CD8-positive, alpha-beta T cell (primary cell): ENCODE measurements at regions of chr6 and their contacts with region 1.

Region 1: GRCh38 chr6:30717042-30717844 is at the start of gene MDC1:
- DNase-seq: peak; percentile 97 to 100 (median 98)
- ATAC-seq: peak; percentile 72
- H3K4me3 ChIP-seq: peak within 1 kb of the TSS; percentile 69 to 70
- H3K4me3 Mint-ChIP-seq: peak within 1 kb of the TSS; percentile 92
- H3K27ac ChIP-seq: peak within 1 kb of the TSS; percentile 83 to 90
- H3K27ac Mint-ChIP-seq: peak within 1 kb of the TSS; percentile 99
- H3K4me1 ChIP-seq: peaks cover 23% of the 10 kb centered on the region
- H3K4me1 Mint-ChIP-seq: peaks cover 51% of the 10 kb centered on the region
- H3K27me3 ChIP-seq: no peaks in the 10 kb centered on the region
- H3K27me3 Mint-ChIP-seq: no peaks in the 10 kb centered on the region
- CTCF ChIP-seq: peak; percentile 47
- total RNA-seq, gene MDC1: 38.9 to 48.8 TPM

Region 2: DNA sequence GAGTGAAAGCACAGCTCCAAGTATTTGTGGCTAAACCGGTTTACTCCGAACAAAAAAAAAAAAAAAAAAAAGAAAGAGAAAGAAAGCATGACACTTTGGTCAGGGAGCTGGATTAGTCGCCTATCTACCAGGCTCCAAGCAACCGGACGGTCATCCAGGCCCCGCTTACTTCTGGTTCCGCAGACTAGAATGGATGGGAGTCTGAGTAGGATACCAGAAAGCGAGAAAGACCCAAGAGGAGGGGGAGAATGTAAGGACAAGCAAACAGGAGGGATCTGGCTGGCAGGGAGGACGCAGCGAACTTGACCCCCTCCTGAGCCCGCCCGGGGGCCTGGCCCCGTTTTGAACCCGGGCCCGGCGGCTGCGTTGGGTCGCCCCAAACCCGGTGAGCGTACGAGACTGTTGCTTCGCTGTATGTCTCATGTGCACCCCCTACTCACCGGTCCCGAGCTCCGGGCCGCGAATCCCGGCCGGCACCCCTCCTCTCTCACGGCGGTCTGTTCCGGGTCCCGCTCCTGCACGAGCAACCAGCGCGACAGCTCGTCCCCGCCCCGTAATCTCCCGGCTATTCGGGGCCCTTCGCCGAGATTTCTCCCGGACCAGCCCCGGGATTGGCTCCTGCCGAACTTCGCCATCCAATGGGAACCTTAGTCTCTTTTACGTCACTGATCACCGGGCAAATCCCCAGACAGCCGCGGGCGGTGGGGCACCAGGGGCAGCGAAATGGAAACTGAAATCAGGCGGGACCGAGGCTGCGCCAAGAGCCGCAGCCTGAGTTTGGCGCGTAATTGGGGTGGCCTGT is 504.2 kb before region 1 on chr6 and contains the start of gene TRIM26:
- CTCF ChIA-PET with region 1: no interaction called
- POLR2A ChIA-PET with region 1: no interaction called
- intact Hi-C with region 1: loop called in 1 of 2 experiments (anchors 10 kb)
- DNase-seq: peak; percentile 92 to 98 (median 96)
- ATAC-seq: peak; percentile 86
- H3K4me3 ChIP-seq: peak within 1 kb of the TSS; percentile 76 to 99
- H3K4me3 Mint-ChIP-seq: peak within 1 kb of the TSS; percentile 99
- H3K27ac ChIP-seq: peak within 1 kb of the TSS; percentile 96
- H3K27ac Mint-ChIP-seq: peak within 1 kb of the TSS; percentile 99
- H3K4me1 ChIP-seq: peaks cover 33% of the 10 kb centered on the region
- H3K4me1 Mint-ChIP-seq: peaks cover 63% of the 10 kb centered on the region
- H3K27me3 ChIP-seq: no peaks in the 10 kb centered on the region
- H3K27me3 Mint-ChIP-seq: no peaks in the 10 kb centered on the region
- CTCF ChIP-seq: no peak
- total RNA-seq, gene TRIM26: 54.8 to 56.8 TPM

Region 3: DNA sequence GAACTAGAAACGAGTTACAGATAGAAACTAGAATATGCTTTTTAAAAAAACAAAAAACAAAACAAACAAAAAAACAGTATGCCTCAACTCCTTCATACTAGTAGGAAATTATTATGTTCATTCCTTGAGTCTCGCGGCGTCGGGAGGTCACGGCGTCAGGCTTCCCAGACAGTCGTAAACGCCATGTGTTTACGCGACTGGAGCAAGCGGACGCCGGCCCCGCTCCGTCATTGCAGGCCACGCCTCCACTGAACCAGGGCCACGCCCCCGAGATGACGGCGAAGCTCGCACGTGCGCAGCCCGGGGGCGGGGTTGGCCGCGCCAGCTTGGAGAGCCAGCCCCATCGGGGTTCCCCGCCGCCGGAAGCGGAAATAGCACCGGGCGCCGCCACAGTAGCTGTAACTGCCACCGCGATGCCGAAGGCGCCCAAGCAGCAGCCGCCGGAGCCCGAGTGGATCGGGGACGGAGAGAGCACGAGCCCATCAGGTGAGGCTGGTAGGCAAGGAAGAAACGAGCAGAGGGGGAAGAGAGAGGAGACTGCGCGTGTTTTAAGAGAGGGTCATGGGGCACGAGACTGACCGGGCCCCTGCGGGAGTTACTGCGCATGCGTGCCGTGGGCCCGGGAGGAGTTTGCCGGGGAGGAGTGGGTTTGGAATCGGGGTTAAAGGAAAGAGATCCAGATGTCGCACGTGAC is 146.0 kb before region 1 on chr6 and contains the start of gene ABCF1:
- CTCF ChIA-PET with region 1: no interaction called
- POLR2A ChIA-PET with region 1: interaction called, 3 read pairs
- intact Hi-C with region 1: loop called in 1 of 2 experiments (anchors 1 kb)
- DNase-seq: peak; percentile 99 to 100 (median 100)
- ATAC-seq: peak; percentile 96
- H3K4me3 ChIP-seq: peak within 1 kb of the TSS; percentile 64 to 86
- H3K4me3 Mint-ChIP-seq: peak within 1 kb of the TSS; percentile 98
- H3K27ac ChIP-seq: peak within 1 kb of the TSS; percentile 90 to 98
- H3K27ac Mint-ChIP-seq: peak within 1 kb of the TSS; percentile 99
- H3K4me1 ChIP-seq: peaks cover 54% of the 10 kb centered on the region
- H3K4me1 Mint-ChIP-seq: peaks cover 69% of the 10 kb centered on the region
- H3K27me3 ChIP-seq: no peaks in the 10 kb centered on the region
- H3K27me3 Mint-ChIP-seq: no peaks in the 10 kb centered on the region
- CTCF ChIP-seq: no peak
- total RNA-seq, gene ABCF1: 121 to 130 TPM

Region 4: GRCh38 chr6:30646458-30647241 is 70.6 kb before region 1 on chr6 and contains the start of gene C6orf136:
- CTCF ChIA-PET with region 1: interaction called, 13 read pairs
- POLR2A ChIA-PET with region 1: interaction called, 4 read pairs
- intact Hi-C with region 1: loop called (anchors 1 to 2 kb)
- DNase-seq: peak; percentile 84 to 98 (median 92)
- ATAC-seq: peak; percentile 83
- H3K4me3 ChIP-seq: peak within 1 kb of the TSS; percentile 91 to 93
- H3K4me3 Mint-ChIP-seq: peak within 1 kb of the TSS; percentile 86
- H3K27ac ChIP-seq: peak within 1 kb of the TSS; percentile 80 to 92
- H3K27ac Mint-ChIP-seq: peak within 1 kb of the TSS; percentile 92
- H3K4me1 ChIP-seq: peaks cover 20% of the 10 kb centered on the region
- H3K4me1 Mint-ChIP-seq: peaks cover 30% of the 10 kb centered on the region
- H3K27me3 ChIP-seq: no peaks in the 10 kb centered on the region
- H3K27me3 Mint-ChIP-seq: no peaks in the 10 kb centered on the region
- CTCF ChIP-seq: no peak
- total RNA-seq, gene C6orf136: 31.4 to 36.0 TPM

Region 5: GRCh38 chr6:30678964-30679726 is 38.1 kb before region 1 on chr6:
- CTCF ChIA-PET with region 1: interaction called, 879 read pairs
- POLR2A ChIA-PET with region 1: interaction called, 324 read pairs
- intact Hi-C with region 1: loop called (anchors 1 kb)
- DNase-seq: peak; percentile 88 to 98 (median 92)
- ATAC-seq: peak; percentile 32
- H3K4me3 ChIP-seq: peak overlapping the region; percentile 86 to 95
- H3K4me3 Mint-ChIP-seq: peak overlapping the region; percentile 99
- H3K27ac ChIP-seq: peak overlapping the region; percentile 21 to 85
- H3K27ac Mint-ChIP-seq: peak overlapping the region; percentile 99
- H3K4me1 ChIP-seq: peaks cover 27% of the 10 kb centered on the region
- H3K4me1 Mint-ChIP-seq: peaks cover 38% of the 10 kb centered on the region
- H3K27me3 ChIP-seq: no peaks in the 10 kb centered on the region
- H3K27me3 Mint-ChIP-seq: no peaks in the 10 kb centered on the region
- CTCF ChIP-seq: peak; percentile 92

Region 6: DNA sequence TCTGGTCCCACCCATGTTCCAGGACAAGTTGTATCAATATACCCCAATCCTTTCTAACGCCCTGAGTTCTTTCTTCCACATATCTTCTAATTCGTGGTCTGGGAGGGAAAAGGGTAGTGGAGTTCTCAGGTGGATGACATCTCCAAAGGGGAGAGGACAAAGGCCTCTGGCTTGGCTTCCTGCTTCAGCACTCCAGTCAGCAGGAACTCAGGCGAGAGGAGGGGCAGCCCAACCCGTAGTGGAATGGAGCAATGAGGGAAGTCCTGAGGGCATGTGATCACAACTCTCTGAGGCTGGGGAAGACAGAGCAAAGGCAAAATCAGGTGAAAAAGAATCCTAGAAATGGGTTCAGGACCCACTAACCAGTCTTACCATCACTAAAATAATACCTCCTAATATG is 16.9 kb before region 1 on chr6:
- CTCF ChIA-PET with region 1: interaction called, 17 read pairs
- POLR2A ChIA-PET with region 1: interaction called, 4 read pairs
- intact Hi-C with region 1: no loop called
- DNase-seq: no peak
- ATAC-seq: no peak
- H3K4me3 ChIP-seq: no peak overlapping the region
- H3K4me3 Mint-ChIP-seq: no peak overlapping the region
- H3K27ac ChIP-seq: no peak overlapping the region
- H3K27ac Mint-ChIP-seq: no peak overlapping the region
- H3K4me1 ChIP-seq: no peaks in the 10 kb centered on the region
- H3K4me1 Mint-ChIP-seq: no peaks in the 10 kb centered on the region
- H3K27me3 ChIP-seq: no peaks in the 10 kb centered on the region
- H3K27me3 Mint-ChIP-seq: no peaks in the 10 kb centered on the region
- CTCF ChIP-seq: no peak

Region 7: GRCh38 chr6:30759575-30760239 is 42.5 kb after region 1 on chr6:
- CTCF ChIA-PET with region 1: no interaction called
- POLR2A ChIA-PET with region 1: no interaction called
- intact Hi-C with region 1: no loop called
- DNase-seq: no peak
- ATAC-seq: no peak
- H3K4me3 ChIP-seq: no peak overlapping the region
- H3K4me3 Mint-ChIP-seq: no peak overlapping the region
- H3K27ac ChIP-seq: no peak overlapping the region
- H3K27ac Mint-ChIP-seq: no peak overlapping the region
- H3K4me1 ChIP-seq: peaks cover 16% of the 10 kb centered on the region
- H3K4me1 Mint-ChIP-seq: peaks cover 19% of the 10 kb centered on the region
- H3K27me3 ChIP-seq: no peaks in the 10 kb centered on the region
- H3K27me3 Mint-ChIP-seq: no peaks in the 10 kb centered on the region
- CTCF ChIP-seq: no peak

Region 8: GRCh38 chr6:31619805-31620585 is 902.8 kb after region 1 on chr6:
- CTCF ChIA-PET with region 1: no interaction called
- POLR2A ChIA-PET with region 1: no interaction called
- intact Hi-C with region 1: loop called in 1 of 2 experiments (anchors 5 kb)
- DNase-seq: peak; percentile 94 to 99 (median 96)
- ATAC-seq: peak; percentile 80
- H3K4me3 ChIP-seq: peak overlapping the region; percentile 83 to 96
- H3K4me3 Mint-ChIP-seq: peak overlapping the region; percentile 91
- H3K27ac ChIP-seq: peak overlapping the region; percentile 95 to 99
- H3K27ac Mint-ChIP-seq: peak overlapping the region; percentile 96
- H3K4me1 ChIP-seq: peaks cover 37% of the 10 kb centered on the region
- H3K4me1 Mint-ChIP-seq: peaks cover 52% of the 10 kb centered on the region
- H3K27me3 ChIP-seq: no peaks in the 10 kb centered on the region
- H3K27me3 Mint-ChIP-seq: no peaks in the 10 kb centered on the region
- CTCF ChIP-seq: no peak